Activated T-helper 1 cell treated with anti-CD3 and anti-CD28 coated beads, Interleukin-12 subunit alpha, Interleukin-12 subunit beta, Interleukin-2, Interleukin-4 antibody, amounts not matched to agents 30 ng/mL and 10 ng/mL and 1 ng/mL, durations not matched to agents 14 hours and 24 hours and 36 hours (primary cell): ENCODE measurements at regions of chr6 and their contacts with region 1.

Region 1: GRCh38 chr6:14665827-14666724 is 548.5 kb downstream of the CD83 start:
- DNase-seq: no peak
- H3K4me3 Mint-ChIP-seq: no peak overlapping the region
- H3K27ac Mint-ChIP-seq: no peak overlapping the region
- H3K4me1 Mint-ChIP-seq: peaks cover 28% of the 10 kb centered on the region
- H3K27me3 Mint-ChIP-seq: peaks cover 32% of the 10 kb centered on the region

Region 2: GRCh38 chr6:14542670-14543366 is 123.3 kb before region 1 on chr6:
- intact Hi-C with region 1: loop called (anchors 1 kb)
- DNase-seq: peak; percentile 10
- H3K4me3 Mint-ChIP-seq: no peak overlapping the region
- H3K27ac Mint-ChIP-seq: peak overlapping the region; percentile 64
- H3K4me1 Mint-ChIP-seq: peaks cover 26% of the 10 kb centered on the region
- H3K27me3 Mint-ChIP-seq: peaks cover 1% of the 10 kb centered on the region

Region 3: GRCh38 chr6:14638906-14639761 is 26.9 kb before region 1 on chr6:
- intact Hi-C with region 1: loop called (anchors 1 kb)
- DNase-seq: no peak
- H3K4me3 Mint-ChIP-seq: no peak overlapping the region
- H3K27ac Mint-ChIP-seq: no peak overlapping the region
- H3K4me1 Mint-ChIP-seq: peaks cover 70% of the 10 kb centered on the region
- H3K27me3 Mint-ChIP-seq: peaks cover 8% of the 10 kb centered on the region

Region 4: DNA sequence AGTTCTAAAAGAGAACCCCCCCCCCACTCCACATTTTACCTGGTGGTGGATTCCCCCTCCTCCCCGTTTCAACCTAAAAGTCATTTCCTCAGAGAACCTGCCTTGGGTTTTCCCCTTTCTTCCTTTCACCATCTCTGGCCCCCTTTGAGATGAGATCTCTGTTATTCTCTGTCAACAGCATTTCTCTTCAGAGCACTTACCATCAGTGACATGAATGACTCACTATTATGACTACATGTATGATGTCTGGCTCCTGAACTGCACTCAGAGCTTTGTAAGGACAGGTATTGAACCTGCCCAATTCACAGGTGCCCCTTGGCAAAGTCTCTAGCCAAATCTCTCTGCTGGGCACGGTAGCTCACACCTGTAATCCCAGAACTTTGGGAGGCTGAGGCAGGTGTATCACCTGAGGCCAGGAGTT is 518.4 kb after region 1 on chr6:
- intact Hi-C with region 1: loop called (anchors 10 kb)
- DNase-seq: peak; percentile 25
- H3K4me3 Mint-ChIP-seq: no peak overlapping the region
- H3K27ac Mint-ChIP-seq: peak overlapping the region; percentile 94
- H3K4me1 Mint-ChIP-seq: peaks cover 16% of the 10 kb centered on the region
- H3K27me3 Mint-ChIP-seq: no peaks in the 10 kb centered on the region